CD4-positive, alpha-beta T cell (primary cell): ENCODE measurements at regions of chr12 and their contacts with region 1.

Region 1: GRCh38 chr12:26884765-26885576 is 52.0 kb upstream of the ITPR2 start:
- DNase-seq: peak; percentile 68 to 91 (median 78)
- ATAC-seq: peak; percentile 100
- H3K4me3 ChIP-seq: peak overlapping the region; percentile 19
- H3K4me3 Mint-ChIP-seq: peak overlapping the region; percentile 36
- H3K27ac ChIP-seq: no peak overlapping the region
- H3K27ac Mint-ChIP-seq: no peak overlapping the region
- H3K4me1 ChIP-seq: peaks cover 9% of the 10 kb centered on the region
- H3K4me1 Mint-ChIP-seq: peaks cover 7% of the 10 kb centered on the region
- H3K27me3 ChIP-seq: no peaks in the 10 kb centered on the region
- H3K27me3 Mint-ChIP-seq: peaks cover 9% of the 10 kb centered on the region
- CTCF ChIP-seq: peak; percentile 96

Region 2: GRCh38 chr12:26097046-26097878 is 787.7 kb before region 1 on chr12:
- CTCF ChIA-PET with region 1: no interaction called
- POLR2A ChIA-PET with region 1: no interaction called
- intact Hi-C with region 1: loop called (anchors 1 to 10 kb)
- DNase-seq: peak; percentile 22 to 78 (median 40)
- ATAC-seq: peak; percentile 80
- H3K4me3 ChIP-seq: no peak overlapping the region
- H3K4me3 Mint-ChIP-seq: no peak overlapping the region
- H3K27ac ChIP-seq: no peak overlapping the region
- H3K27ac Mint-ChIP-seq: no peak overlapping the region
- H3K4me1 ChIP-seq: no peaks in the 10 kb centered on the region
- H3K4me1 Mint-ChIP-seq: no peaks in the 10 kb centered on the region
- H3K27me3 ChIP-seq: no peaks in the 10 kb centered on the region
- H3K27me3 Mint-ChIP-seq: peaks cover 17% of the 10 kb centered on the region
- CTCF ChIP-seq: peak; percentile 98

Region 3: DNA sequence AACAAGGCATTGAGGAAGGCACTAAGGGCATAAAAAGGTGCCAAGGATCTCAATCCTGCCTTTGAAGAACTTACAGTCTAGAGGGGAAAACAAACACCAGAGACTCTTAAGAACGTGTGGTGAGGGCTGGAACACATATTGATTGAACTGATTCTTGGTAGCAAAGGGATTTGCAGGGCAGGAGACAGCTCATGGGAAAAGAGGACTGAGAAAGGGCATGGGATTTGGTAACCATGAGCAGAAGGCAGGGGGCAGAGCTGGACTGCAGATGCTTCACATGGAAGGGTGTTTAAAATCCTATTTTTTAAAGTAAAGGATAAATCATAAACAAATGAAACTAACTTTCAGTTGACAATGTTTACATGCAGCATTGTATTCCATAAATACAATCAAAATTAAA is 255.1 kb before region 1 on chr12:
- CTCF ChIA-PET with region 1: no interaction called
- POLR2A ChIA-PET with region 1: no interaction called
- intact Hi-C with region 1: loop called in 1 of 2 experiments (anchors 5 kb)
- DNase-seq: no peak
- ATAC-seq: no peak
- H3K4me3 ChIP-seq: no peak overlapping the region
- H3K4me3 Mint-ChIP-seq: no peak overlapping the region
- H3K27ac ChIP-seq: no peak overlapping the region
- H3K27ac Mint-ChIP-seq: no peak overlapping the region
- H3K4me1 ChIP-seq: no peaks in the 10 kb centered on the region
- H3K4me1 Mint-ChIP-seq: no peaks in the 10 kb centered on the region
- H3K27me3 ChIP-seq: no peaks in the 10 kb centered on the region
- H3K27me3 Mint-ChIP-seq: no peaks in the 10 kb centered on the region
- CTCF ChIP-seq: no peak

Region 4: DNA sequence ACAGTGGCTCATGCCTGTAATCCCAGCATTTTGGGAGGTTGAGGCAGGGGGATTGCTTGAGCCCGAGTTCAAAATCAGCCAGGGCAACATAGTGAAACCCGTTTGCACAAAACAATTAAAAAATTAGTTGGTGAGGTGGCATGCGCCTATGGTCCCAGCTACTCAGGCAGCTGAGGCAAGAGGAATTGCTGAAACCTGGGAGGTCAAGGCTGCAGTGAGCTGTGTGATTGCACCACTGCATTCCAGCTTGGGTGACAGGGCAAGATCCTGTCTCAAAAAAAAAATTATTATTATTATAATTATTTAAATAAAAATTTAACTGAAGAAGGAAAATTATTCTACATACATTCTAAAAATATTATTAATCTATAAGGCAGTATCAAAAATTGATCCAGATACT is 216.1 kb before region 1 on chr12:
- CTCF ChIA-PET with region 1: no interaction called
- POLR2A ChIA-PET with region 1: no interaction called
- intact Hi-C with region 1: no loop called
- DNase-seq: no peak
- ATAC-seq: no peak
- H3K4me3 ChIP-seq: no peak overlapping the region
- H3K4me3 Mint-ChIP-seq: no peak overlapping the region
- H3K27ac ChIP-seq: no peak overlapping the region
- H3K27ac Mint-ChIP-seq: no peak overlapping the region
- H3K4me1 ChIP-seq: no peaks in the 10 kb centered on the region
- H3K4me1 Mint-ChIP-seq: no peaks in the 10 kb centered on the region
- H3K27me3 ChIP-seq: no peaks in the 10 kb centered on the region
- H3K27me3 Mint-ChIP-seq: no peaks in the 10 kb centered on the region
- CTCF ChIP-seq: no peak

Region 5: DNA sequence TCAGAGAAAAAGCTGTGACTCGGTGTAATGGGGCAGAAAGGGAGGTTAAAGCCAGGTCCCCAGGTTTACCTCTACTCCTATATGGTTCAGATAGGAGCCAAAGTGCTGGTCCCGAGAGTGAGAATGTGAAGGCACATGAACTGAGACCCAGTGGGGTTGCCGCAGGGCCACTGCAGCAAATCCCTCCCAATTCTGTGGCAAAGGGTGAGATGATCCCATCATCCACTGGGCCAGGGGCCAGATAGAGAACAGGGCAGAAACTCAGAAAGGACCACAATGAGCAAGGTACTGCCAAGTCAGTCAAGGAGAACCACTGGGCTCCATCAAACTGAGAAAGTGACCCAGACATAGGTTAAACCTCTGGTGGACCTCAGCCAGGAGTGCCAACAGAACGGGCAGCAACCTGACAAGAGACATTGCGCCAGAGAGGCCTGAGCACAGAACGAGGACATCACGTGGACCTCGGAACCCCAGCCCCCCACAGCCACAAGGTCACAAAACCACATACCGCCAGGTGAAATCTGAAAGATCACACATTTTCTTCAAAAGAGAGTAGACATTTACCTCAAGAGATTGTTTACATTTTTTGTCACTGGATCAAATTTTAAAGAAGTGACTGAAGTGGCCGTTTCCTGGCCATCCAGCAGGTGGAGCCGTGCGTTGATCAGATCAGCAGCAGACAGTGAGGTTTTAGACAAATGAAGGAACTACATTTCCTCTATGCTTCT is 31.5 kb before region 1 on chr12:
- CTCF ChIA-PET with region 1: interaction called, 8 read pairs
- POLR2A ChIA-PET with region 1: no interaction called
- intact Hi-C with region 1: loop called (anchors 1 kb)
- DNase-seq: peak; percentile 56 to 84 (median 63)
- ATAC-seq: peak; percentile 99
- H3K4me3 ChIP-seq: no peak overlapping the region
- H3K4me3 Mint-ChIP-seq: no peak overlapping the region
- H3K27ac ChIP-seq: no peak overlapping the region
- H3K27ac Mint-ChIP-seq: no peak overlapping the region
- H3K4me1 ChIP-seq: no peaks in the 10 kb centered on the region
- H3K4me1 Mint-ChIP-seq: no peaks in the 10 kb centered on the region
- H3K27me3 ChIP-seq: no peaks in the 10 kb centered on the region
- H3K27me3 Mint-ChIP-seq: peaks cover 4% of the 10 kb centered on the region
- CTCF ChIP-seq: peak; percentile 80

Region 6: GRCh38 chr12:26874501-26875296 is 10.3 kb before region 1 on chr12:
- CTCF ChIA-PET with region 1: interaction called, 15 read pairs
- POLR2A ChIA-PET with region 1: interaction called, 4 read pairs
- intact Hi-C with region 1: no loop called
- DNase-seq: peak in 1 of 14 experiments; percentile 18
- ATAC-seq: no peak
- H3K4me3 ChIP-seq: no peak overlapping the region
- H3K4me3 Mint-ChIP-seq: no peak overlapping the region
- H3K27ac ChIP-seq: no peak overlapping the region
- H3K27ac Mint-ChIP-seq: no peak overlapping the region
- H3K4me1 ChIP-seq: peaks cover 6% of the 10 kb centered on the region
- H3K4me1 Mint-ChIP-seq: peaks cover 10% of the 10 kb centered on the region
- H3K27me3 ChIP-seq: peaks cover 0 to 6% of the 10 kb centered on the region in 2 experiments
- H3K27me3 Mint-ChIP-seq: no peaks in the 10 kb centered on the region
- CTCF ChIP-seq: no peak

Region 7: DNA sequence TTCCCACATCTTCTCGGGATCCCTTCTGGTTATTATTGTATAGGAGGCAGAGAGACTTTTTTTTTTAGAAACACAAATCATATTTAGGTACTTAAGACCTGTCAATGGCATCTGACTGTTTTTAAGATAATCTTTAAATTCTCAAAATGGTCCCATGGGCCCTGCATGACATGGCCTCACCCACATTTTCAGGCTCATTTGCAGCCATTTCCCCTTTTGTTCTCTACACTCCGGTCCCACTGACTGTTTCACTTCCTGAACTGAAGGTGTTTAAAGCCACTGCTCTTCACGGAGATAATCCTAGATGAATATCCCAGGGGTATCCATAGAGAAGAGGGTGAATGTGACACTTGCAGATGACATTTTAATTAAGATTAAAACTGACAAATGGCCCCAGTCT is 209.8 kb after region 1 on chr12:
- CTCF ChIA-PET with region 1: no interaction called
- POLR2A ChIA-PET with region 1: no interaction called
- intact Hi-C with region 1: no loop called
- DNase-seq: no peak
- ATAC-seq: no peak
- H3K4me3 ChIP-seq: no peak overlapping the region
- H3K4me3 Mint-ChIP-seq: no peak overlapping the region
- H3K27ac ChIP-seq: no peak overlapping the region
- H3K27ac Mint-ChIP-seq: no peak overlapping the region
- H3K4me1 ChIP-seq: no peaks in the 10 kb centered on the region
- H3K4me1 Mint-ChIP-seq: no peaks in the 10 kb centered on the region
- H3K27me3 ChIP-seq: no peaks in the 10 kb centered on the region
- H3K27me3 Mint-ChIP-seq: no peaks in the 10 kb centered on the region
- CTCF ChIP-seq: no peak